Activated CD4-positive, alpha-beta T cell treated with anti-CD3 and anti-CD28 coated beads, Interleukin-2, amount 10 ng/mL, durations not matched to agents 7 days and 5 days (primary cell): ENCODE measurements at regions of chr14 and their contacts with region 1.

Region 1: GRCh38 chr14:104752735-104753531 is at the start of gene SIVA1:
- DNase-seq: peak; percentile 100
- H3K4me3 Mint-ChIP-seq: peak within 1 kb of the TSS; percentile 85
- H3K27ac Mint-ChIP-seq: peak within 1 kb of the TSS; percentile 95
- H3K4me1 Mint-ChIP-seq: peaks cover 54% of the 10 kb centered on the region
- H3K27me3 Mint-ChIP-seq: no peaks in the 10 kb centered on the region
- total RNA-seq, gene SIVA1: 84.7 to 135 TPM

Region 2: DNA sequence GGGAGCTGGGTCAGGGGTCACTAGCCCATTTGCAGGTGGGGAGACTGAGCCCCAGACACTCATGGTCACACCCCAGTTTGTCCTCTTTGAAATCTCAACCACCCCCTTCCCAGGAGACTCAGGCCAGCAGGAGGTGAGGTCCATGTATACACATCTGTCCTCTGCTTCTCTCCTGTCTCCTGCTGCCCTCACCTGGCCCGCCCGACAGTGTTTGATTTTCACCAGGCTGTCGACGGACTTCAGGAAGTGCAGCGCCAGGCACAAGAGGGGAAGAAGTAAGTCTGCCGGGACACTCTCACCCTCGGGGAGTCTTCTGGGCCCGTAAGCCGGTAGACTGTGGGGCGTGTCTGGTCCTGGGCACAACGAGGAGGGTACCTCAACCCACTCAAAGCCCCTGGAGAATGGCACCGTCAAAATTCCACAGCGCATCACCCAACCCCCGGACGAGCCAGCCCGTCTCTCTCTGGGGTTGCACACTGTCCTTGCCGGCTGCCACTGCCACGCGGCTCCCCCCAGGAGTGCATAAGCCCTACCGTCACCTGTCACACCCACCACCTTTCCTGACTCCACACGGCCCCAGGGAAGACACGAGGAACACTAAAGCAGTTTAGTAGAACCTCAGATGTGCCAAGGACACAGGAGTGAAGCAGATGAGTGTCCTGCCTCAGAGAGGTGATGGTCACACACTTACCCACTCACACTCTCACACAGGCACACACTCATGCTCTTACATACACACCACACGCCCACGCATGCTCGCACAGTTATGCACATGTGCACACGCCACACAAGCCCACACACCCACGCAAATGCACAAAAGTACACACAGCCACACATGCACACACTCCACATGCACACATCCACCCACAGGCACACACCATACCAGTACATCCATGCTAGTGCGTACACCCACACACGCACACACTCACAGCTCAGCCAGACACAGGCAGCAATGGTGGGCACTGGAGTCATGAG is 13.1 kb before region 1 on chr14:
- CTCF ChIA-PET with region 1: interaction called, 10 read pairs
- POLR2A ChIA-PET with region 1: no interaction called
- DNase-seq: no peak
- H3K4me3 Mint-ChIP-seq: no peak overlapping the region
- H3K27ac Mint-ChIP-seq: no peak overlapping the region
- H3K4me1 Mint-ChIP-seq: no peaks in the 10 kb centered on the region
- H3K27me3 Mint-ChIP-seq: no peaks in the 10 kb centered on the region

Region 3: GRCh38 chr14:104768437-104769323 is 15.7 kb after region 1 on chr14:
- CTCF ChIA-PET with region 1: interaction called, 21 read pairs
- POLR2A ChIA-PET with region 1: no interaction called
- DNase-seq: peak; percentile 92
- H3K4me3 Mint-ChIP-seq: no peak overlapping the region
- H3K27ac Mint-ChIP-seq: no peak overlapping the region
- H3K4me1 Mint-ChIP-seq: peaks cover 13% of the 10 kb centered on the region
- H3K27me3 Mint-ChIP-seq: no peaks in the 10 kb centered on the region

Region 4: DNA sequence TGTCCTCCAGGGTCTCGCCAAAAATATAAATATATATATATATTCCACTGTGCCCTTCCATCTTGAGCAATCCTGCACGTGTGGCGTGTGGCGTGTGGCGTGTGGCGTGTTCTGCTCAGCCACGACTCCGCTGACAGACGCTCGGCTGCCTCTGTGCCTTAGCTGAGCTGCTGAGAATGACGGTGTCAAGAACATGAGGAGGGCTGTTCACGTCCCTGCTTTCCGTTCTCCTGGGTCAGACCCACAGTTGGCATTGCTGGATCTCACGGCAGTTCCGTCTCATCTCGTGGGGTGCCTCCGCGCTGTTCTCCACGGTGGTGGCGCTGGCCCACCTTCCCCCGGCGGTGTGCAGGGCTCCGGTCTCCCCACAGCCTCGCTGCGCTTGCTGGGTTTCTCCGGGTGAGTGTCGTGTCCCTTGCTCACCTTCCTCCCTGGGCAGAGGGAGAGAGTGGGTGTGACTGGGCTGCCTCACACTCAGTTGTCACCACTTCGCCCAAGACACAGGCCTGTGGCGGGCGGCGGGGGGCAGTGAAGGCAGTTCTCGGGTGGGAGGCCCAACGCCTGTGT is 302.9 kb after region 1 on chr14:
- CTCF ChIA-PET with region 1: no interaction called
- POLR2A ChIA-PET with region 1: no interaction called
- DNase-seq: no peak
- H3K4me3 Mint-ChIP-seq: no peak overlapping the region
- H3K27ac Mint-ChIP-seq: peak overlapping the region; percentile 25
- H3K4me1 Mint-ChIP-seq: peaks cover 33% of the 10 kb centered on the region
- H3K27me3 Mint-ChIP-seq: no peaks in the 10 kb centered on the region